Activated CD4-positive, alpha-beta memory T cell treated with anti-CD3 and anti-CD28 coated beads, Interleukin-2, amount 10 ng/mL, durations not matched to agents 7 days and 5 days (primary cell): ENCODE measurements at regions of chr10 and their contacts with region 1.

Region 1: DNA sequence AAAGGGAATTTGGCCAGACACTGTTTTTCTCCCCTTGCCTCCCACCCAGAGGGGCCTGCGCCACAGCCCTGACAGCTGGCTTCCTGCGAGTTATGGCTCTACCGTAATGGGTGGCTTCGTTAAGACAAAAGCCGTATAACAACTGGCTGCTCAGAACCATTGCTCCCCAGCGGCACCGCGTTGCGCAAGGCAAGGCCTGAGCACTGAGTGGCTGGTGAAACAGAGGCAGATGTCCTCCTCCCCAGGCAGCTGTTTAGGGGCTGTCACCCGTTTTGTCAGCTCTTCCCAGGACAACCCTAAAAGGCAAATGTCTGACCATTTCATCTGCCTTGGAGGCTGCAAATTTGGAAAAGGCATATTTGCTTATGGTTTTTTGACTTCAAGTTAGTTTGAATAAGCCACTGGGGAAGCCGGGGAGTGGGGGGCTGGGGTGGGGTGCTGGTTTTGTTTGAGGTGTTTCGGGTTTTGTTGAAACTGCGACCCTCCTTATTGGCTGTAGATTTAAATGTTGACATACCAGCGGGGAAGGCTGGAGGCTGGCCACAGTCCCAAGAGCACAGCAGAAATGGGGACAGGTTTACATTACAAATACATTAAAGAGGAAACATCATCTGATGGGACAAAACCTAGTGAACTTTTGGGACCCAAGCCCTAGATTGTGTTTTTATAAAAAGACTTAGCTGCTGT is 681 bp upstream of the SPOCK2 start:
- DNase-seq: peak; percentile 68
- H3K4me3 Mint-ChIP-seq: peak overlapping the region; percentile 100
- H3K27ac Mint-ChIP-seq: peak overlapping the region; percentile 100
- H3K4me1 Mint-ChIP-seq: peaks cover 54% of the 10 kb centered on the region
- H3K27me3 Mint-ChIP-seq: no peaks in the 10 kb centered on the region

Region 2: DNA sequence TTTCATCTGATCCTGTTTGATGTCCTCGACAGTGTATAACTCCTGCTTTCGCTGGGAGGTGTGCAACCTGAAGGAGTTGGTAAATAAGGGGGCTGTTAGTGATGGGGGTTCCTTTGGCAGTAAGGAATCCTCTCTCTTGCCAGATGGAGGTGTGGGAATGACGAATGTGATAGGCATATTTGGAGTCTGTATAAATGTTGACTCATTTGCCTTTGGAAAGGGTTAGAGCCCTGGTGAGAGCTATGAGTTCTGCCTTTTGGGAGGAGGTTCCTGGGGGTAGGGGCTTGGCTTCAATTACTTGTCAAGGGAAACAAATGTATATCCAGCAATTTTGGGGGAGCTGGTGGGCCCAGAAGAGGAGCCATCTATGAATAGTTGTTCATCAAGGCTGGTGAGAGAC is 136.3 kb before region 1 on chr10:
- CTCF ChIA-PET with region 1: no interaction called
- POLR2A ChIA-PET with region 1: no interaction called
- DNase-seq: no peak
- H3K4me3 Mint-ChIP-seq: no peak overlapping the region
- H3K27ac Mint-ChIP-seq: no peak overlapping the region
- H3K4me1 Mint-ChIP-seq: no peaks in the 10 kb centered on the region
- H3K27me3 Mint-ChIP-seq: peaks cover 3% of the 10 kb centered on the region

Region 3: GRCh38 chr10:72107325-72108003 is 18.4 kb after region 1 on chr10:
- CTCF ChIA-PET with region 1: interaction called, 12 read pairs
- POLR2A ChIA-PET with region 1: interaction called, 68 read pairs
- DNase-seq: no peak
- H3K4me3 Mint-ChIP-seq: peak overlapping the region; percentile 79
- H3K27ac Mint-ChIP-seq: peak overlapping the region; percentile 95
- H3K4me1 Mint-ChIP-seq: peaks cover 61% of the 10 kb centered on the region
- H3K27me3 Mint-ChIP-seq: no peaks in the 10 kb centered on the region

Region 4: DNA sequence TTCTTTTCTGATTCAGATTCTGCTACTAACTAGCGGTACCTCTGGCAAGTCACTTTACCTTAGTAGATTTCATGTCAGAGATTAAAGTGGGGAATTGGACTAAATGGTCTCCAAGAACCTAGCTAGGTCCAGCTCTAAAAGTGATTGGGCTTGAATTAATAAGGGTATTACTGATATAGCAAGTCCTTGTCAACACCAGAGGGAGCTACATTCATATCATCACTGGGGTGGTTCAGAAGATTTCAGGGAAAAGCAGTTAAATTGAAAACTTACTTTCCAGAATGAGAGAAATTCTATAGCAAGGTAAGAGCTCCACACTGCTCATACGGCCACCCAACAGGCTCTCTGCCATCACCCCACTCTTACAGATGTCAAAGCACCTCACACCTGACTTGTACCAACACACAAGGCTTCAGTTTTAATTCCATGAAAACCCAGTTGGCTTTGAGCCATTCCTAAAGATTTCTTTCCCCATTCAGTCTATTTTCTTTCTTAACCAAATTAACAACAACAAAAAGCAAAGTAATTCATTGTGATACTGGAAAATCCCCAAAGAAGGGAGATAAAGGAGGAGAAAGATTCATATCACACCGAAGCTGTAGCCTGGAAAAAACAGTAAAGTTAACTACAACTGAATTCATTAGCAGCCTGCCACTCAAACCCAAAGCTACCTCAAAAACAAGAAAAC is 37.3 kb after region 1 on chr10:
- CTCF ChIA-PET with region 1: interaction called, 18 read pairs
- POLR2A ChIA-PET with region 1: interaction called, 11 read pairs
- DNase-seq: no peak
- H3K4me3 Mint-ChIP-seq: no peak overlapping the region
- H3K27ac Mint-ChIP-seq: no peak overlapping the region
- H3K4me1 Mint-ChIP-seq: peaks cover 28% of the 10 kb centered on the region
- H3K27me3 Mint-ChIP-seq: no peaks in the 10 kb centered on the region

Region 5: GRCh38 chr10:72173635-72174296 is 84.7 kb after region 1 on chr10:
- CTCF ChIA-PET with region 1: no interaction called
- POLR2A ChIA-PET with region 1: interaction called, 11 read pairs
- DNase-seq: peak; percentile 18
- H3K4me3 Mint-ChIP-seq: no peak overlapping the region
- H3K27ac Mint-ChIP-seq: no peak overlapping the region
- H3K4me1 Mint-ChIP-seq: peaks cover 12% of the 10 kb centered on the region
- H3K27me3 Mint-ChIP-seq: no peaks in the 10 kb centered on the region

Region 6: GRCh38 chr10:72215652-72216549 is 126.9 kb after region 1 on chr10 and contains the starts of genes ANAPC16 and ASCC1:
- CTCF ChIA-PET with region 1: interaction called, 3 read pairs
- POLR2A ChIA-PET with region 1: interaction called, 38 read pairs
- DNase-seq: peak; percentile 94
- H3K4me3 Mint-ChIP-seq: peak within 1 kb of the TSS; percentile 98
- H3K27ac Mint-ChIP-seq: peak within 1 kb of the TSS; percentile 99
- H3K4me1 Mint-ChIP-seq: peaks cover 61% of the 10 kb centered on the region
- H3K27me3 Mint-ChIP-seq: no peaks in the 10 kb centered on the region
- total RNA-seq, gene ANAPC16: 94.2 to 101 TPM
- total RNA-seq, gene ASCC1: 35.5 to 36.2 TPM

Region 7: GRCh38 chr10:72260588-72261322 is 171.7 kb after region 1 on chr10:
- CTCF ChIA-PET with region 1: no interaction called
- POLR2A ChIA-PET with region 1: interaction called, 23 read pairs
- DNase-seq: peak; percentile 95
- H3K4me3 Mint-ChIP-seq: peak overlapping the region; percentile 79
- H3K27ac Mint-ChIP-seq: peak overlapping the region; percentile 98
- H3K4me1 Mint-ChIP-seq: peaks cover 65% of the 10 kb centered on the region
- H3K27me3 Mint-ChIP-seq: no peaks in the 10 kb centered on the region